Activated CD8-positive, alpha-beta T cell treated with anti-CD3 and anti-CD28 coated beads for 36 hours (primary cell): ENCODE measurements at regions of chr1 and their contacts with region 1.

Region 1: DNA sequence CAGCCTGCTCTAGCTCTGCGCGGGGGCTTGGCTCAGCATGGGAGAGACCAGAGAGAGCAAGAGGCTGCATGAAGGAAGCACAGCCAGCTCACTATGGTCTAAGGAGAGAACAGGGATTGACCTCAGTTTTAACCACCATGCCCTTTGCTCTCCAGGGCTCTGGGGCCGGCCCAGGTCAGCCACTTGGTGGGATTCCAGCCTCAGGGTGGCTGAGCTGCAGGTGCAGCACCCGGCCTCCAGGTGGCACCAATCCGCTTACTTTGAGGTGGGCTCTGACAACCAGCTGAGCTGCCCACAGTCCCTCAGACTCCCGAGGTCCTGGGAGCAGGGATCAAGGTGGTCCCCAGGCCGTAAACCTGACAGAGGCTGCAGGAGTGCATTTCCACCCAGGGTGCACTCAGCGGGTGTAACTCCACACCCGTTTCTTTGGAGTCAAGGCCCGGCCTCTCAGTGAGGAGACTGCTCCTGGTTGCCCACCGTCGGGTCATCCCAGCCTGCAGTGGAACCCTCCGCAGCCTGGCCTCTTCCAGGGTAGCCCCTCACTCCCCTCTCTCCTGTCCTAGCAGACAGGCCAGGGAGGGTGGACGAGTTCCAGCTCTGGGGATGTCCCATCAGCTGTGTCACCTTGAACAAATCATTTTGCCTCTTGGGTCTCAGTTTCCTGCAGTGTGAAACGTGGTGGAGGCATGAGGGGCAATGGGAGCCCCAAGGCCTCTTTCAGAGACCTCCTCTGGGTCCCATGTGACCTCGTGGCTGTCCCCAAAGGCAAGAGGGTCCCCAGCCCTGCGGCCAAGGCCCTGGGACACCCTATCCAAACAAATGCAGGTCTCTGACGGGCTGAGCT is 607 bp upstream of the LGR6 start:
- DNase-seq: peak; percentile 75
- ATAC-seq: peak; percentile 72
- H3K4me3 Mint-ChIP-seq: no peak overlapping the region
- H3K27ac Mint-ChIP-seq: no peak overlapping the region
- H3K4me1 Mint-ChIP-seq: peaks cover 7% of the 10 kb centered on the region
- H3K27me3 Mint-ChIP-seq: peaks cover 14% of the 10 kb centered on the region
- CTCF ChIP-seq: peak; percentile 85

Region 2: GRCh38 chr1:201982623-201983379 is 210.2 kb before region 1 on chr1 and contains the start of gene RNPEP:
- CTCF ChIA-PET with region 1: no interaction called
- POLR2A ChIA-PET with region 1: no interaction called
- intact Hi-C with region 1: no loop called
- DNase-seq: peak; percentile 65
- ATAC-seq: peak; percentile 82
- H3K4me3 Mint-ChIP-seq: peak within 1 kb of the TSS; percentile 92
- H3K27ac Mint-ChIP-seq: peak within 1 kb of the TSS; percentile 87
- H3K4me1 Mint-ChIP-seq: peaks cover 22% of the 10 kb centered on the region
- H3K27me3 Mint-ChIP-seq: no peaks in the 10 kb centered on the region
- CTCF ChIP-seq: no peak
- total RNA-seq, gene RNPEP: 37.8 to 39.5 TPM

Region 3: DNA sequence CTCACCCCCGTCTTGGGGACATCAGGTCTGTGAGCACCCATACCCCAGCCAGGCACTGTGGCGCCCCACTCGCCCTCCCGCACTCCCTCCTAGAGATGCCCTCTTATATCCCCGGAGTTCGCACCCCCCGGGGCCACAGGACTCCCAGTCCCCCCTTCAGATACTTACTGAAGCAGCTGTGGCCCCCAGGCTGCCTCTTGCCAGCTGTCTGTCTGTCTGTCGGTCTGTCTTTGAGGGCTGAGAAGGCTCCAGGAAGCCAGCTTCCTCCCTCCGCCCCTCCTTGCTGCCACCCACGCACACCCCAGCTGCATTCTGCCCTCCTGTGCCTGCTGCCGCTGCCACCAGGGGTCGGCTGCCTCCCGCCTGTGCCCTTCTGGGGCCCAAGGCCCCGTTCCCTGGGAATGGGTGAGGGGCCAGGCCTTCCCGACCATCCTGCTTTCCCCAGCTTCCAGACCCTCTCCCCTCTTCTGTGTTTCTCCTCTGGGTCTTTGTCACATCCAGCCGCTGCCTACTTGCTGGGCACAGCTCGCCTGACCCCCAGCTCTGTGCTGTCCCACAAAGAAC is 32.5 kb before region 1 on chr1 and contains the start of gene PTPN7:
- CTCF ChIA-PET with region 1: interaction called, 10 read pairs
- POLR2A ChIA-PET with region 1: interaction called, 4 read pairs
- intact Hi-C with region 1: no loop called
- DNase-seq: peak; percentile 96
- ATAC-seq: peak; percentile 52
- H3K4me3 Mint-ChIP-seq: peak within 1 kb of the TSS; percentile 95
- H3K27ac Mint-ChIP-seq: peak within 1 kb of the TSS; percentile 95
- H3K4me1 Mint-ChIP-seq: peaks cover 64% of the 10 kb centered on the region
- H3K27me3 Mint-ChIP-seq: no peaks in the 10 kb centered on the region
- CTCF ChIP-seq: peak; percentile 85
- total RNA-seq, gene PTPN7: 195 to 200 TPM

Region 4: DNA sequence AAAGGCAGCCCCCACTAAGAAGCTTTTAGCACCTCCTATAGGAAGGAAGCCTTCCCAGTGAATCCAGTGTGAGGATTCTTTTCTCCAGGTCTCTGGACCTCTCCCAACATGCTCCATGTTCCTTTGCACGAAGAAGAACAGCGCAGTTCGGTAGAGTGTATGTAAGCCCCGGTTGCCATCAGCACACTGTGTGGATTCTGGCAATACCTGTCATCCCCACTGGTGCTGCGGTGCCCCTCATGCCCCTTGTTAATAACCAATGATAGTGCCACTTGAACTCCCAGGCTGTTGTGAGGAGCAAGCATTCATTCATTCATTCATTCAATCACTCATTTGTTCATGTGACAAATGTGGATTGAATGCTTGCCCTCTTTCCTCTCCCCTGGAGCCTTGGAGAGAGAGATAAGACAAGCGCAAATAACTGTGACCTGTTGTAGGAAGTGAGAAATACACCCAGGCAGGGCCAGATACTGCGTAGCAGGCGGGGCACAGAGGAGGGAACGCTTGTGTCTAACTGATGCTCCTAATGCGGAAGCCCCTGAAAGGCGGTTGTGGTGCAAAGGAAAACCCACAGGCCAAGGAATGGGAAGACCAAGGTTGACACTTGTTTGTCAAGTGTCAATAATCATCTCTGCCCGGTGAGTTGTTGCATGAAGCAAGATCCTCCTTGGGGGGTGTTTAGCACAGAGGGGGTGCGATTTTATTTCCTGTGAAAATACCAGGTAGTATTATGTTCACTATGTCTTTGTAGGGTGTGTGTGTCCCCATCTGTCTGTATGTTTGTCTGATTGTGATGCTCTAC is 10.4 kb after region 1 on chr1:
- CTCF ChIA-PET with region 1: interaction called, 11 read pairs
- POLR2A ChIA-PET with region 1: no interaction called
- intact Hi-C with region 1: no loop called
- DNase-seq: peak; percentile 36
- ATAC-seq: peak; percentile 69
- H3K4me3 Mint-ChIP-seq: no peak overlapping the region
- H3K27ac Mint-ChIP-seq: no peak overlapping the region
- H3K4me1 Mint-ChIP-seq: peaks cover 16% of the 10 kb centered on the region
- H3K27me3 Mint-ChIP-seq: no peaks in the 10 kb centered on the region
- CTCF ChIP-seq: no peak

Region 5: GRCh38 chr1:202274611-202275010 is 81.6 kb after region 1 on chr1:
- CTCF ChIA-PET with region 1: interaction called, 19 read pairs
- POLR2A ChIA-PET with region 1: no interaction called
- intact Hi-C with region 1: no loop called
- DNase-seq: peak; percentile 76
- ATAC-seq: peak; percentile 55
- H3K4me3 Mint-ChIP-seq: no peak overlapping the region
- H3K27ac Mint-ChIP-seq: no peak overlapping the region
- H3K4me1 Mint-ChIP-seq: no peaks in the 10 kb centered on the region
- H3K27me3 Mint-ChIP-seq: peaks cover 2% of the 10 kb centered on the region
- CTCF ChIP-seq: peak; percentile 58